AG04450 (cell line): ENCODE measurements at regions of chr3 and their contacts with region 1.

Region 1: GRCh38 chr3:136752422-136753325 is 496 bp upstream of the STAG1 start:
- DNase-seq: peak; percentile 96
- H3K4me3 ChIP-seq: peak overlapping the region; percentile 71
- H3K27ac ChIP-seq: peak overlapping the region; percentile 99
- H3K27me3 ChIP-seq: no peaks in the 10 kb centered on the region
- CTCF ChIP-seq: peak; percentile 42

Region 2: DNA sequence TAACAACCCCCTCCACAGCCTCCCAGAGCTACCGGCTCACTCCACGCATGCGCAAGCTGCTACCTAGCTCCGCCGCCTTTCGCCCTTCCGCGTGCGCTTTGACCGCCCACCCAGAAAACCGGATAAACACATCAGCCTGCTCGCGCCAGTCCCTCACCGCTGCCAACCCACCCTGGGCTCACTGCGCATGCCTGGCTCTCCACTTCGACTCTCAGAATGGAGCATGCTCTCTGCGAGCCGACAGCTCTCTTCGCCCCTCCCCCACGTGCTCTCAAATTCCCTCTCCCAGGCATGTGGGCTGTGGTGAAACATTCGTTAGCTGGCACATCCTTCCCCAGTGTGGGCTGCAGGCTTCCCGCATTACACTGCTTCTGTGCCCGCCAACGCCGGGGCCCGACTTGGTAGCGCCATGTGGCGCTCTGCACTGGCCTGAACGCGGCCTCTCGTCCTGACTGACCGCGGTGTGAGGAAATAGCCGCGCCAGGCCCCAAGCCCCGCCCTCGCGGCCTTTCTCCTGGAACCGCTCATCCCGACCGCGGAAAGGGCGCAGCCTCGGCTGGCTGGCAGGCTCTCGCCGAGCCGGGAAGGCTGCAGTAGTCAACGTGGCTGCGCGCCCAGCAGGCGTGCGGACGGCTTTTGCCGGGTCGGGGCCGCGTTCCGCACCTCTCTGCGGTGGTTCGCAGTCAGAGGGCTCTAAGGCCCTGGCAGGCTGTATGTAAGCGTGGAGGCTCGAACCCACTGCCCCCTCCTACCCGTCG is 556.1 kb before region 1 on chr3:
- CTCF ChIA-PET with region 1: interaction called, 13 read pairs
- POLR2A ChIA-PET with region 1: interaction called, 34 read pairs
- DNase-seq: peak; percentile 100
- H3K4me3 ChIP-seq: peak overlapping the region; percentile 90
- H3K27ac ChIP-seq: peak overlapping the region; percentile 99
- H3K27me3 ChIP-seq: no peaks in the 10 kb centered on the region
- CTCF ChIP-seq: no peak

Region 3: GRCh38 chr3:136343446-136344281 is 409.0 kb before region 1 on chr3:
- CTCF ChIA-PET with region 1: interaction called, 13 read pairs
- POLR2A ChIA-PET with region 1: no interaction called
- DNase-seq: peak; percentile 86
- H3K4me3 ChIP-seq: no peak overlapping the region
- H3K27ac ChIP-seq: peak overlapping the region; percentile 63
- H3K27me3 ChIP-seq: no peaks in the 10 kb centered on the region
- CTCF ChIP-seq: no peak

Region 4: GRCh38 chr3:136390574-136390973 is 362.1 kb before region 1 on chr3:
- CTCF ChIA-PET with region 1: interaction called, 88 read pairs
- POLR2A ChIA-PET with region 1: interaction called, 24 read pairs
- DNase-seq: no peak
- H3K4me3 ChIP-seq: no peak overlapping the region
- H3K27ac ChIP-seq: no peak overlapping the region
- H3K27me3 ChIP-seq: no peaks in the 10 kb centered on the region
- CTCF ChIP-seq: no peak

Region 5: GRCh38 chr3:136505676-136506075 is 247.0 kb before region 1 on chr3:
- CTCF ChIA-PET with region 1: interaction called, 11 read pairs
- POLR2A ChIA-PET with region 1: no interaction called
- DNase-seq: no peak
- H3K4me3 ChIP-seq: no peak overlapping the region
- H3K27ac ChIP-seq: no peak overlapping the region
- H3K27me3 ChIP-seq: no peaks in the 10 kb centered on the region
- CTCF ChIP-seq: no peak

Region 6: GRCh38 chr3:136741063-136741462 is 11.6 kb before region 1 on chr3:
- CTCF ChIA-PET with region 1: interaction called, 22 read pairs
- POLR2A ChIA-PET with region 1: no interaction called
- DNase-seq: no peak
- H3K4me3 ChIP-seq: no peak overlapping the region
- H3K27ac ChIP-seq: no peak overlapping the region
- H3K27me3 ChIP-seq: no peaks in the 10 kb centered on the region
- CTCF ChIP-seq: no peak

Region 7: GRCh38 chr3:137013955-137014688 is 261.4 kb after region 1 on chr3:
- CTCF ChIA-PET with region 1: interaction called, 159 read pairs
- POLR2A ChIA-PET with region 1: interaction called, 24 read pairs
- DNase-seq: peak; percentile 74
- H3K4me3 ChIP-seq: peak overlapping the region; percentile 56
- H3K27ac ChIP-seq: no peak overlapping the region
- H3K27me3 ChIP-seq: no peaks in the 10 kb centered on the region
- CTCF ChIP-seq: peak; percentile 79

Region 8: DNA sequence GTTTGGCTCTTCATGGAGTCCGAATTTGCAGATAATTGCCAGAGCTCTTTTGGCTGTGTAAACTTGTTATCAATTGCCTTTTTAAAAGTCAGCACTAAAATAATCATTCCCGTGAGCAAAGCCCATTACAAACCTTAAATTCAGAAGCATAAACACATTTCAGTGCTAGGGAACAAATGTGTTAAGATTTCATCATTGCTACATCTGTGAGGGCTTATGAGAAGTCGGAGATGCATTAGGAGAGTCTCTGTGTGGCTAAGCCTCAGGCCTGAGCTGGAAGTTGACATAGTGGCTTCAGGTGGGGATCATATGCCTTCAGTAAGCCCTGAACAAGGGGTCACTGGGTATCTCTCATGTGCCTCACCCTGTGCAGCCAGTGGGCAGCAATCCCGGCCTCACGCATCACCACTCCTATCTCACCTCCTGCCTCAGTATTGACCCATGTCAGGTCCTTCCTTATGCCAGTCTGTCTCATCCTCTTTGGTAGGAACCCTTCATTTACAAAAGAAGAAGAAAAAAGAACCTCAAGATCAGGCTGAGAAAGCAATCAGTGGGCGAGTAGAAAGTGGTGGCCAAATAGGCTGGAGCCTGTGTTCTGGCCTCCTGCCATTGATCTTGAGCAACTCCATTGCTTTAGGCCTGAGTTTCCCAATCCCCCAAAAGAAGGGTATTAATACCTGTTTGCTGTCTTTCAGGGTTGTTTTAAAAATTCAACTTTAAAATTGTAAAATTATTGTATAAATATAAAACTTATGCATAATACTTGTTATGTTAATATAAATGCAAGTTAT is 438.7 kb after region 1 on chr3:
- CTCF ChIA-PET with region 1: no interaction called
- POLR2A ChIA-PET with region 1: no interaction called
- DNase-seq: no peak
- H3K4me3 ChIP-seq: no peak overlapping the region
- H3K27ac ChIP-seq: no peak overlapping the region
- H3K27me3 ChIP-seq: no peaks in the 10 kb centered on the region
- CTCF ChIP-seq: no peak